ENCODE measurements at regions of chr9 and their contacts with region 1.

Region 1: GRCh38 chr9:98204692-98205091 is 12.3 kb upstream of the CORO2A start:
- DNase-seq: no peak
- H3K4me3 ChIP-seq: no peak overlapping the region
- H3K27ac ChIP-seq: no peak overlapping the region
- H3K4me1 ChIP-seq: no peaks in the 10 kb centered on the region
- H3K27me3 ChIP-seq: no peaks in the 10 kb centered on the region
- CTCF ChIP-seq: no peak
- POLR2A ChIP-seq: no peak

Region 2: DNA sequence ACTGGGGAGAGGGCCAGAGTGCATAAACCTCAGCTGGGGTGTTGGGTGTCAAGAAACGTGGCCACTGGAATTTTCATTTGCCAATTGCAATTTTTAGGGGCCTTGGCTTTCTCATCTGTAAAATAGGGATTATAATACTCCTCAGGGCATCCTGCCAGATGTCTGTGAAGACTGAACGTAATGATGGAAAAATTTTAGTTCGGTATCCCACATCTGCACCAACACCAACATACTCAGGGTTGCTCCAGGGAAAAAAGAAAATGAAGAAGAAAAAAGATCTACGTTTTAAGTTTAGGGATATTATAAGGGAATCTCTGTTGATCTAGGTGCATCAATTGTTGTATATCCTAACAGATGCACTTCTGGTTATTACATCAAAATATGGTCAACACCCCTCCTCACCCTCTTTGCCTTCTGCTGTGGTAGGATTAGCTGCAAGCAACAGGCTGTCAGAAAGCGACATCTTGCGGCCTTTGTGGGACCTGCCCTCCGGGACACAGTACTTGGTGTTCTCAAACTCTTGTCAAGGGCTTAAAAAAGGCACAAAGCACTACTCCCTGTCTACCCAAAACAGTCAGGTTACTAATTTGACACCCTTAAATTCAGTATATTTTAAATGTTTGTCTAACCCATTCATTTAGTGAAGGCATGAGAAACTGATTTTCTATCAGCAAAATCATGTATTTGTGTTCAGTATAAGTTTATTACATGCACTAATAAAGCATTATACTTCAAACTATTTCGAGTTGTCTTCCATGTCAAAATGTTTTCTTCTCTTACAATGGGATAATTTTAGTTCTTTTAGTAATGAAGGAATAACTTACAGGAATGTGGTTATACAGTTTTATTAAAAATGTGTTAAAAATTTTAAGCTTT is 59.0 kb after region 1 on chr9:
- intact Hi-C with region 1: loop called (anchors 1 kb)
- DNase-seq: peak; percentile 77
- H3K4me3 ChIP-seq: no peak overlapping the region
- H3K27ac ChIP-seq: no peak overlapping the region
- H3K4me1 ChIP-seq: no peaks in the 10 kb centered on the region
- H3K27me3 ChIP-seq: no peaks in the 10 kb centered on the region
- CTCF ChIP-seq: peak; percentile 59 to 92 (median 78)
- POLR2A ChIP-seq: no peak

Measured in prostate gland (tissue), 2 donors.